Endothelial cell of umbilical vein (primary cell): ENCODE measurements at regions of chr4 and their contacts with region 1.

Region 1: GRCh38 chr4:22500831-22501719 is 14.8 kb downstream of the ADGRA3 start:
- DNase-seq: peak; percentile 51
- H3K4me3 ChIP-seq: no peak overlapping the region
- H3K27ac ChIP-seq: no peak overlapping the region
- H3K4me1 ChIP-seq: peaks cover 3% of the 10 kb centered on the region
- H3K27me3 ChIP-seq: no peaks in the 10 kb centered on the region
- CTCF ChIP-seq: no peak
- POLR2A ChIP-seq: no peak

Region 2: GRCh38 chr4:22474636-22475310 is 26.3 kb before region 1 on chr4:
- CTCF ChIA-PET with region 1: interaction called, 4 read pairs
- POLR2A ChIA-PET with region 1: no interaction called
- dilution Hi-C with region 1: no loop called
- intact Hi-C with region 1: loop called (anchors 2 kb)
- DNase-seq: peak; percentile 52
- H3K4me3 ChIP-seq: no peak overlapping the region
- H3K27ac ChIP-seq: peak overlapping the region; percentile 29
- H3K4me1 ChIP-seq: peaks cover 14% of the 10 kb centered on the region
- H3K27me3 ChIP-seq: no peaks in the 10 kb centered on the region
- CTCF ChIP-seq: no peak
- POLR2A ChIP-seq: no peak